RWPE1 (cell line): ENCODE measurements at regions of chr18 and their contacts with region 1.

Region 1: GRCh38 chr18:3604498-3605408 is 154.8 kb downstream of the TGIF1 start:
- DNase-seq: no peak
- H3K27ac ChIP-seq: peak overlapping the region; percentile 94
- CTCF ChIP-seq: no peak

Region 2: DNA sequence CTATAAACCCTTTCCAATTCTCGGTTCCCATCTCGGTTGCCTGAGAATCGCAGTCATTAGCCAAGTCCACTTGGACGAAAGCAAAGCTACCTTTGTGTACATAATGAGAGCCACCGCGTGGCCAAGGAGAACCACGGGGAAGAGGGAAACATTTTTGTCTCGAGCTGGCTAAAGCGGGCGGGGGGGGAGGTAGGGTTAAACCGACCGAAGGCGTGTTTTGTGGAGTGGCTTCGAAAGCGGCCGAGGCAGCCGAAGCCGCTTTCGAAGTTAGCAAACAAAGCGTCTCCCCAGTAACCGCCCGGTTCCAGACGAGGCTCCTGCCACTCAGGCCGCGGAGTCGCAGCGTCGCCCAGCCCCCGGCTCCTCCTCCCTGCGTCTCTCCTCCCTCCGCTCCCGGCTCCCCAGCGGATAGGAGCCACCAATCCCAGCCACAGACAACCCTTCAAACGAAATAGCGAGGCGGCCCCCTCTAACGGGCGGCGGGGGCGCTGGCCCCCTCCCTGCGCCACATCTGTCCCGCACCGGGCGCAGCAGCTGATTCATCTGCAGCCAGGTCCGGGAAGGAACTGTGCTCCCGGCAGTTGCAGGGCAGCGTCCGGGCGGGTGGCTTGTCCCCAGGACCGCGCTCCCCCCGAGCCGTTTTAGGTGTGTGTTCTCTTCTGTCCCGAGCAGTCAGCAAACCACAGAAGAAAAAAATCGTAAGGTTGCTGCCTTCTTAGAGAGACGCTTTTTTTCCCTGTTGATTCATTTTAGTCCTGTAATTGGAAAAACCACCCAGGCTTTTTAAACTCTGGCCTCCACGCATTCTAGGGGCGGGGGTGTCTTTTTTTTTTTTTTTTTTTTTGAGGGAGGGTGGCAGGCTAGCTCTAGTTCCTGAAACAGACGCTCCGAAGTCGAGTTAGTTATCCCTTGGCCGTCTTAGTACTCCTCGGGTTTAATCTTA is 156.6 kb before region 1 on chr18:
- CTCF ChIA-PET with region 1: interaction called, 3 read pairs
- POLR2A ChIA-PET with region 1: interaction called, 11 read pairs
- DNase-seq: peak; percentile 93
- H3K27ac ChIP-seq: peak overlapping the region; percentile 100
- CTCF ChIP-seq: peak; percentile 22; the same call in 1 of the 2 replicates

Region 3: DNA sequence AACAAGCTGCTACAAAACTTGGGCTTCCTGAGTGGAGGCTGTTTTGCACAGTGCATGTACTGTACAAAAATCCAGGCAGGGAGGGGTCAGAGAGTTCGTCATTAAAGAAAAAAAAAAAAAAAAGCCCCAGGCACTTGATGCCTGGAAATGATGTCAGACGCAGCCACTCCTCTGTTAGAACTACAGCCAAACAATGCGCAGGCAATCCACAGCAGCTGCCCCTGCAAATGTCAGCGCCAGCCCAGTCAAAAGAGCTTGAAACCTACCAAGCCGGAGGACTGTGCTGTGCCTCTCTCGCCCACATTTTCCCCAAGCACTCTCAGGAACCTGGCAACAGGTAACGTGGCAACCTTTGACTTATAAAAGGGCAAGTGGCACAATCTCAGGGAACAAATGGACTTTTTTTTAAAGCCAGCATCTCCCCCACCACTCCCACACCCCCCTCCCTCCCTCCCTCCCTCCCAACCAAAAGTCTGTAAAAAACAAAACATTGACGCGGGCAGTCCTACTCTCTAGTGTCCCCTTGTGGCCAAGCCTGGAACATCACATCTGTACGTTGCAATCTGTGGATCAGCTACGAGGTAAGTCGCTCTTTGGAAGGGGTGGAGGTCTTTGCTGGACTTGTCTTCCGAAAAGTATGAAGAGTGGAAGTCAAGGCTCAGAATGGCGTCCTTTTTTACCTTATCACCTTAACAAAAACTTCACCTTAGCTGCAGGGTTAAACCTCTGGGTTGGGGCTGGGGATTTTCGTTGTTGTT is 10.7 kb before region 1 on chr18:
- CTCF ChIA-PET with region 1: interaction called, 14 read pairs
- POLR2A ChIA-PET with region 1: interaction called, 5 read pairs
- DNase-seq: peak; percentile 94
- H3K27ac ChIP-seq: peak overlapping the region; percentile 98
- CTCF ChIP-seq: peak; percentile 95

Region 4: DNA sequence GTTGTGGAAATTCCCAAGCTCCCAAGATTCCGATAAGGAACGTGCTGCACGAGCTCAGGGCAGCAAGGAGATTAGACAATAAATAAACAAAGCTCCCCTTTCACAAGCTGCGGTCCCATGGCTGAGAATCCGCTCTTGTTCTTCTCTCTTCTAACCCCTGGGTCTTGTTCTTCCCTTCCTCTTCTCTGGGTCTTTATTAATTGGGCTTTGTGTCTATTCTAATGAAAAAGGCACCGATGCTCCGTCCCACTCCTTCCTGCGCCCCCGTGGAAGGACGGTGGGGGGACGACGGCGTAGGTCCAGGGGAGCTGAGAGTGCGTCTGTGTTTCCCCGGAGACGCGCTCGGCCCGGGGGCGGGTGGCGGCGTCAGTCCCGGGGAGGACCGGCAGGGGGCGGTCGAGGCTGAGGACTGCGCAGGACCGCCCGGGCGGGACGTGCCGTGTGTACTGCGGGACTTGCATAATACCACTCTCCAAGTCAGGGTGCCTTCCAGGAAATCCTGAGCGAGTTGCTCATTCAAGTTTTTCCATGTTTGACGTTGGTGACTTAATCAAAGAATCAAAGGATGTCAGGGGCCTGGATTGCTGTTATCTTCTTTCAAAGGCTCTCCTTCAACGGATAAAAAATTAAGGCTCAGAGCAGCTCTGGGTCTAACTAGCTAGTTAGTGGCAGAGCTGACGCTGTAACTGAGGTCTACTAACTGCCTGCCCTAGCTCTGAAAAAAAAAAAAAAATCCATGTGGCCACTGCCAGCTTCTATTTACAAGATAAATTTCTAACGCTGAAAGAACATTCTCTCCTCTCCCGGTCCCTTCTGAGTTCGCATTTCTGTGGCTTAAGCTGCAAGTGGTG is 166.6 kb after region 1 on chr18:
- CTCF ChIA-PET with region 1: no interaction called
- POLR2A ChIA-PET with region 1: no interaction called
- DNase-seq: peak; percentile 91
- H3K27ac ChIP-seq: peak overlapping the region; percentile 31; the same call in 1 of the 2 replicates
- CTCF ChIP-seq: peak; percentile 96